Sigmoid colon (tissue), 7 donors: ENCODE measurements at regions of chr10 and their contacts with region 1.

Region 1: DNA sequence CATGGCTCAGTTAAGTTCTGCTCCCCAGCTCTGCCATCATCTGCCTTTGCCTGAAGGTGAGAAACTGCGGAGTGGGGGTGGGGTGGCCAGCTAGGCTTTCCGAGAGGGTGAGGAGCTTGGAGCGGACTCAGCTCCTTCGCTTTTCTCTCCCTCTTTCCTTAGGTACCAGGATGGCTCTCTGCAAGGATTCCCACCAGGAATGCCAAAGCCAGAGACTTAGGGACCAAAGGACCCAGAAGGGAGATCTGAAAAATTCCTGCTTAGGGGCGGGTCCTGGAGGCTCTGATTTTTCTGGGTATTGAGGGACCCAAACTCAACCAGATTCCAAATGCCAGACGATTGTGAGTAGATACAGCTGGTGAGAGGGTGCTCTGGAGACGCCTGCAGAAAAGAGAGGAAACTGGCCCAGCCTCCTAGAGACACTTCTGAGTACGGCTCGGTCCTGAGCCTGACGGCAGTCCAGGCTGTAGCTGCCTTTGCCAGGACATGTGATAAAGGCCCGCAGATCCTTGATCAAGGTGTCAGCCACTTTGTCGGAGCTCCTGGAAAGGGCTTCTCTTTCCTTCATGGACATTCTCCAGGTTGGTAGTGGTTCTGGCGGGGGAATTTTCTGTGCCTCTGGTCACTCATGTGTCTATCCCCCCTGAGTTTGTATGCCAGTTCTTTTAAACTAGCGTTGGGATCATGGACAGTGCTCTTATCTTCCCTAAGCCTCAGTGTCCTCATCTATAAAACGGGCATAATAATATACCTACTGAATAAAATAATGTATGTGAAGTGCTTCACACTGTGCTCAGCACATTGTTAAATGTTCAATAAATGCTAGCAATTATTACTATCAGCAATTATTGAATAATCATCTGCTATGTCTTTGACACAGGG is 42.5 kb upstream of the BTRC start:
- DNase-seq: no peak
- H3K4me3 ChIP-seq: peak overlapping the region in 2 of 4 donors; percentile 13 to 28
- H3K27ac ChIP-seq: no peak overlapping the region
- H3K4me1 ChIP-seq: peaks cover 0 to 12% (median 5%) of the 10 kb centered on the region in 4 donors
- H3K27me3 ChIP-seq: peaks cover 7 to 72% (median 26%) of the 10 kb centered on the region in 3 donors
- CTCF ChIP-seq: no peak
- EP300 ChIP-seq: no peak
- POLR2A ChIP-seq: no peak

Region 2: GRCh38 chr10:101130984-101131961 is 180.2 kb before region 1 on chr10 and contains the start of gene TLX1:
- intact Hi-C with region 1: no loop called
- DNase-seq: peak; percentile 63
- H3K4me3 ChIP-seq: peak within 1 kb of the TSS in 2 of 4 donors; percentile 41 to 42
- H3K27ac ChIP-seq: no peak within 1 kb of the TSS
- H3K4me1 ChIP-seq: peaks cover 0 to 46% (median 42%) of the 10 kb centered on the region in 4 donors
- H3K27me3 ChIP-seq: peaks cover 49 to 100% (median 97%) of the 10 kb centered on the region in 3 donors
- CTCF ChIP-seq: no peak
- EP300 ChIP-seq: no peak
- POLR2A ChIP-seq: no peak
- total RNA-seq, gene TLX1: not detected

Region 3: GRCh38 chr10:101373063-101373462 is 61.6 kb after region 1 on chr10:
- intact Hi-C with region 1: loop called (anchors 2 kb)
- DNase-seq: no peak
- H3K4me3 ChIP-seq: no peak overlapping the region
- H3K27ac ChIP-seq: no peak overlapping the region
- H3K4me1 ChIP-seq: peaks cover 0 to under 1% (median 0%) of the 10 kb centered on the region in 4 donors
- H3K27me3 ChIP-seq: no peaks in the 10 kb centered on the region
- CTCF ChIP-seq: no peak
- EP300 ChIP-seq: no peak
- POLR2A ChIP-seq: no peak

Region 4: GRCh38 chr10:101478956-101479355 is 167.5 kb after region 1 on chr10:
- intact Hi-C with region 1: no loop called
- DNase-seq: no peak
- H3K4me3 ChIP-seq: no peak overlapping the region
- H3K27ac ChIP-seq: no peak overlapping the region
- H3K4me1 ChIP-seq: no peaks in the 10 kb centered on the region
- H3K27me3 ChIP-seq: no peaks in the 10 kb centered on the region
- CTCF ChIP-seq: no peak
- EP300 ChIP-seq: no peak
- POLR2A ChIP-seq: no peak